Panc1 (cell line): ENCODE measurements at regions of chr7 and their contacts with region 1.

Region 1: DNA sequence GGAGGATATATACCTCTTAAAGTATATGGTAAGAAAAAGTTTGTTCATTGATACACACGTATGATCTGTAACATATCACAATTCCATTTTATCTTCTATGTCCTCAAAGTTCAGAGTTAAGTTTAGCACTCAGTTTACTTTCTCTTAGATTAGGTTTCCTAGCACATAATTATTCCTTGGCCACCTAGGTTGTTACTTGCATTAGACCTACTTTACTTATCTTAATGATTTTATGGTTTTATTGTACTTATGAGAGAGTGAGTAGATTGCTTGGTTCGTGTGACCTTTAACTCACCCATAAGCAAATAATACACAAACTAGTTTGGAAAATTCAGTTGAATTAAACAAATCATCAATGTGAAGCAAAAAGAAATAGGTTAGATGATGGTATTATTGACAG is 33.9 kb upstream of the SP4 start:
- DNase-seq: no peak
- ATAC-seq: no peak
- H3K4me3 ChIP-seq: no peak overlapping the region
- H3K27ac ChIP-seq: no peak overlapping the region
- H3K4me1 ChIP-seq: no peaks in the 10 kb centered on the region
- H3K27me3 ChIP-seq: no peaks in the 10 kb centered on the region
- CTCF ChIP-seq: no peak

Region 2: GRCh38 chr7:21454182-21454581 is 60.2 kb after region 1 on chr7:
- CTCF ChIA-PET with region 1: interaction called, 14 read pairs
- POLR2A ChIA-PET with region 1: no interaction called
- in situ Hi-C with region 1: no loop called
- intact Hi-C with region 1: no loop called
- DNase-seq: no peak
- ATAC-seq: no peak
- H3K4me3 ChIP-seq: no peak overlapping the region
- H3K27ac ChIP-seq: no peak overlapping the region
- H3K4me1 ChIP-seq: no peaks in the 10 kb centered on the region
- H3K27me3 ChIP-seq: no peaks in the 10 kb centered on the region
- CTCF ChIP-seq: no peak